ENCODE measurements at regions of chr1 and their contacts with region 1.

Region 1: DNA sequence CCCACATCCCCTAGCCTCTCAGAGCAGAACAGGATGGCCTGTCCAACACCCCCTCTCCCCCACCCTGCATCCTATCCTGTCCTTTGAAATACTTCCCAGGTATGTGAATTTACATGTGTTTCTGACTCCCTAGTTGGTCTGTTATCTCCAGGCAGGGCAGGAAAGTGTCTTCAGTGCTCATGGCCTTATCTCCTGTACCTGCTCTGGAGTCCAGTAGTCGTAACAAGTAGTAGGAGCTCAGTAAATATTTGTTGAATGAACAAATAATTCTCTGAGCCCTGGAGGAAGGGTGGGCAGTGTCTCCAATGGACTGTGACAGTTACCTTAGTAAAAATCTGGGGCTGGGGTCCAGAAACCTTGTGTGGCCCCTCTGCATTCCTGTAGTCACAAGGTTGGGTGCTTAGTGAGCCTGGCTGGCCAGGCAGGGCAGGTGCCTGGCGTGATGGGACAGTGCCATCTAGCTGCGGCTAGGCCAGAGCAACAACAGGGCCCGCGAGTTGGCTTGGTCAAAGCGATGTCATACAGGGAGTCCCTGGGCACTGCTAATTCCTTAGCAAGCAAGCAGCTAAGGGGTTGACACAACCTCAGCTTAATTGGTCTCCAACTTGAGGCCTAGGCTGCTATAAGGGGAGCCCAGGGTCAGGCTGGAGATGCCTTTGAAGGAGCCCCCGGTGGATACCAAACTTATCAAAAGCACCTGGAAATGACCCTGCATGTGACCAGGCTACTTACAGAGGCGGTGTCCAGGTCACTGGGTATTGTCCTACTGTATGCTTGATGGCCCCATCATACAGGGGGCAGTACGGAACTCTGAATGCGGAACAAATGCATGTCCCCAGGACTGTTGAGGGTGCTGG is 89.0 kb upstream of the PPM1J start:
- DNase-seq: no peak
- H3K4me3 ChIP-seq: no peak overlapping the region
- H3K27ac ChIP-seq: no peak overlapping the region
- H3K4me1 ChIP-seq: no peaks in the 10 kb centered on the region
- H3K27me3 ChIP-seq: no peaks in the 10 kb centered on the region
- CTCF ChIP-seq: peak in 1 of 3 experiments; percentile 19
- POLR2A ChIP-seq: no peak

Region 2: GRCh38 chr1:112676543-112676942 is 127.6 kb before region 1 on chr1:
- intact Hi-C with region 1: no loop called
- DNase-seq: no peak
- H3K4me3 ChIP-seq: no peak overlapping the region
- H3K27ac ChIP-seq: no peak overlapping the region
- H3K4me1 ChIP-seq: peaks cover 30% of the 10 kb centered on the region
- H3K27me3 ChIP-seq: no peaks in the 10 kb centered on the region
- CTCF ChIP-seq: no peak
- POLR2A ChIP-seq: no peak

Region 3: GRCh38 chr1:112718691-112719276 is 85.3 kb before region 1 on chr1:
- intact Hi-C with region 1: no loop called
- DNase-seq: no peak
- H3K4me3 ChIP-seq: peak overlapping the region; percentile 15 to 43
- H3K27ac ChIP-seq: no peak overlapping the region
- H3K4me1 ChIP-seq: peaks cover 41% of the 10 kb centered on the region
- H3K27me3 ChIP-seq: no peaks in the 10 kb centered on the region
- CTCF ChIP-seq: peak; percentile 42 to 80 (median 71)
- POLR2A ChIP-seq: no peak

Region 4: GRCh38 chr1:113057006-113057405 is 252.9 kb after region 1 on chr1:
- intact Hi-C with region 1: loop called (anchors 10 kb)
- DNase-seq: no peak
- H3K4me3 ChIP-seq: no peak overlapping the region
- H3K27ac ChIP-seq: no peak overlapping the region
- H3K4me1 ChIP-seq: no peaks in the 10 kb centered on the region
- H3K27me3 ChIP-seq: no peaks in the 10 kb centered on the region
- CTCF ChIP-seq: no peak
- POLR2A ChIP-seq: no peak

Measured in vagina (tissue), 2 donors.